Posterior vena cava (tissue), 2 donors: ENCODE measurements at regions of chr18 and their contacts with region 1.

Region 1: GRCh38 chr18:13288509-13289133 is 70.1 kb downstream of the LDLRAD4 start:
- DNase-seq: peak; percentile 51

Region 2: DNA sequence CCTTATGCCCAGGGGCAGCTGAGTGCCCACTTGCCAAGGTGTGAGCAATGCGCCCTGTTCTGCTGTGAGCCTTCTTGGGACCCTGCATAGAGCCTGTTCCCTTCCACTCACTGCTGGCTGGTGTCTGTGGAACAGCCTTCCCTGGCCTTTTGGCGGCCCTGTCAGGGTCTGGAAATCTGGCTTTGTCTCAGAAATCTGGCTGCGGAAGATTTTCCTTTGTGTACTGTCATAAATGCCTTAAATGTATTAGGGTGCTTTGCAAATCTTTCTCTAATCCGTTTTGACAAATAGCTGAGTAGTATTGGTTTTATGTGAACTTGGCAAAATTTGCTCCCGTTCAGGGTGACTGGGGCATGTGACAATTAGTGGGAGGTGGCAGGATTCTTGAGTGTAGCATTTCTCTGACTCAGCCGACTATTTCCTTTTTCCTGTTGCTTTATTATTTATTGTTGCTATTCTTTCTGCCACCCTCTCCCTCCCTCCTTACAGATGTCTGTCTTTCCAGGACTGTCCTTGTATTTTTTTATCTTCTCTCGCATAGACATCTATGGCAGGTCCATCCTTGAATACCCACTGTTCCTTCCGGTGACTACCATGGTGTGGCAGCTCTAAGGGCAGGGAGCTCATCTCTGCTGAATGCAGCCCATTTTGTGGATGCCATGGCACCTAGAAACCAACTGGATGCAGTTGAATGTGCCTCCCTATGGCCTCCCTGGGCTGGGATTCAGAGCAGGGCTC is 28.3 kb before region 1 on chr18:
- intact Hi-C with region 1: no loop called
- DNase-seq: peak; percentile 41

Region 3: DNA sequence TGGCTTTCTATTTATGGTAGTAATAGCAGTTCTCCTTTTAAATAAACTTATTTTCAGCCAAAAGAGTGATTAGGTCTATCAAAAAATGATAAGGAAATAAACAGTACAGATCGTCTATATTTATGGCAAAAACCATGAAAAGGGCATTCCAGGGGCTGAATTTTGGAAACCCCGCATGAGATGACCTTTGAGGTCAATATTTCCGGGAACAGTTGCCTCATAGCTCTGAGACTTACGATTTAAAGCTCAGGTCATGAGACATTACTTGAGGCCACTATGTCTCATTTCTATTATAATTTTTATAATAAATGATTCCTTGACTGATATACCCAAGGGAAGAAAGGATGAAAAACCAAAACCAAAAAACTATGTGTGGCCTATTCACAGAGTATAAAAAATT is 31.0 kb after region 1 on chr18:
- intact Hi-C with region 1: loop called in 1 of 2 experiments (anchors 1 kb)
- DNase-seq: no peak